ENCODE measurements at regions of chr2 and their contacts with region 1.

Region 1: GRCh38 chr2:230913406-230914143 is 11.5 kb downstream of the GPR55 start:
- DNase-seq: peak; percentile 67
- H3K4me3 ChIP-seq: no peak overlapping the region
- H3K27ac ChIP-seq: no peak overlapping the region
- H3K4me1 ChIP-seq: no peaks in the 10 kb centered on the region
- H3K27me3 ChIP-seq: no peaks in the 10 kb centered on the region
- CTCF ChIP-seq: peak; percentile 60

Region 2: DNA sequence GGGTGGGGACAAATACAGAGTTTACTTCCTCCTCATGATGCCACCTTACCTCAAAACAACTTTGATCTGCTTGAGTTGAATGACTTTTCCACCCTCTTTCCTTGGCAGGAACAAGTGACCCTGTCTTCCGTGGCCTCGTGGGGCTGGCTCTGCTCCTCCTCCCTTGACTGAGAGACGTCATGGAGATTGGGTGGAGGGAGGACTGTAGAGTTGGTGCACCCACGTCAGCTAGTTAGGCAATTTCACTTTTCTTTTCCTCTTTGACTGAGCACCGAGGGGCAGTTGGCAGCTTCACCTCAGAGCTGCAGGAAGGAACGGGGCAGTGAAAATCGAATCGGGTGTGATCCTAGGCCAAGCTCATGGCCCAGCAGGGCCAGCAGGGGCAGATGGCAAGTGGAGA is 688.1 kb before region 1 on chr2 and contains the start of gene SP140:
- intact Hi-C with region 1: no loop called
- DNase-seq: peak; percentile 41
- H3K4me3 ChIP-seq: no peak within 1 kb of the TSS
- H3K27ac ChIP-seq: peak within 1 kb of the TSS; percentile 53
- H3K4me1 ChIP-seq: no peaks in the 10 kb centered on the region
- H3K27me3 ChIP-seq: no peaks in the 10 kb centered on the region
- CTCF ChIP-seq: no peak
- total RNA-seq, gene SP140: 1.7 to 2.2 TPM

Region 3: GRCh38 chr2:230680463-230681170 is 233.0 kb before region 1 on chr2:
- intact Hi-C with region 1: no loop called
- DNase-seq: no peak
- H3K4me3 ChIP-seq: no peak overlapping the region
- H3K27ac ChIP-seq: no peak overlapping the region
- H3K4me1 ChIP-seq: no peaks in the 10 kb centered on the region
- H3K27me3 ChIP-seq: no peaks in the 10 kb centered on the region
- CTCF ChIP-seq: no peak

Region 4: DNA sequence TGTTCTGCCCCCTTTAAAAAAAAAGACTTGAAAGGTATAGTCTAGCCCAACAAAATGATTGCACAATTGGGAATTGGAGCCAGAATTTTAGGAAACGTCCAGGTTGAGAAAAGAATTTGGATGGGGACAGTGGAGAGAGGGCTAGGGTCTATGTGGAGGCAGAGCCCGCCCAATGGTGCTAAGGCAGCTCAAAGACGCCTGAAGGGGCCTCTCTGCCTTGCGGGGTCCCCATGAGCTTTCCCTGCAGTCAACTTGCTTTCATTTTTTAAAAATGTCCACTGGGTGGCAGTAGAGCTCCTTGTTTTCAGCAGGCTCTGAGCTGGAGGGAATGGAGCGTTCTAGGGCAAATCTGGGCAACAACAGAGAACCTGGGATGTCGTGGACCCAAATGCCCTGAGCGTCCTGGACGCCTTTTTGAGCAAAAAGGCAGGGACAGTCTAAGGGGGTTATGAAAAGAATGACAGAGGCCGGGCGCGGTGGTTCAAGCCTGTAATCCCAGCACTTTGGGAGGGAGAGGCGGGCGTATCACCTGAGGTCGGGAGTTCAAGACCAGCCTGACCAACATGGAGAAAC is 89.1 kb before region 1 on chr2:
- intact Hi-C with region 1: loop called (anchors 5 kb)
- DNase-seq: peak; percentile 64
- H3K4me3 ChIP-seq: no peak overlapping the region
- H3K27ac ChIP-seq: no peak overlapping the region
- H3K4me1 ChIP-seq: no peaks in the 10 kb centered on the region
- H3K27me3 ChIP-seq: peaks cover 9% of the 10 kb centered on the region
- CTCF ChIP-seq: peak; percentile 58

Region 5: DNA sequence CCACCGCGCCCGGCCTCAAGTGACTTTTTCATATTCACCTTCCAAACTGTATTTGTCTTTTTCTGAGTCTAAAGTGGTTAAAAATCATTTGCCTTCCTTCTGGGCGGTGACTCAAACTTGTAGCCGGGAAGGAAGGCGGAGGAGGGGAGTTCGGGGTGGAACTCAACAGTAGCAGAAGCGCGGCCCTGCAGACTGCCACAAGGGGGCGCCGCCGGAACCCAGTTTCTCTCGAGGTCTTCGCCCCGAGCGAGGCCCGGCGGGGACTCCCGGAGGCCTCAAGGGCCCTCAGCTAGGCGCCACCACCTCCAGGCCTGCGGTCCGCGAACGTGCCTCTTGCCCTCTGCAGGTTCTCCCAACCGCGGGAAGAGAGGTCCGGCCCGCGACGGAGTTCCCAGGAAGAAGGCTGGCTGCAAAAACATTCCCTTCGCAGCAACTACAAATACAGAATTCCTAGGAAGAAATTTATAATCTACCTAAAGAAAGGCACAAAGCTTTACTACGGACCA is 65.6 kb before region 1 on chr2:
- intact Hi-C with region 1: loop called (anchors 5 kb)
- DNase-seq: peak; percentile 97
- H3K4me3 ChIP-seq: no peak overlapping the region
- H3K27ac ChIP-seq: no peak overlapping the region
- H3K4me1 ChIP-seq: no peaks in the 10 kb centered on the region
- H3K27me3 ChIP-seq: no peaks in the 10 kb centered on the region
- CTCF ChIP-seq: peak; percentile 91